ENCODE measurements at regions of chr19 and their contacts with region 1.

Region 1: DNA sequence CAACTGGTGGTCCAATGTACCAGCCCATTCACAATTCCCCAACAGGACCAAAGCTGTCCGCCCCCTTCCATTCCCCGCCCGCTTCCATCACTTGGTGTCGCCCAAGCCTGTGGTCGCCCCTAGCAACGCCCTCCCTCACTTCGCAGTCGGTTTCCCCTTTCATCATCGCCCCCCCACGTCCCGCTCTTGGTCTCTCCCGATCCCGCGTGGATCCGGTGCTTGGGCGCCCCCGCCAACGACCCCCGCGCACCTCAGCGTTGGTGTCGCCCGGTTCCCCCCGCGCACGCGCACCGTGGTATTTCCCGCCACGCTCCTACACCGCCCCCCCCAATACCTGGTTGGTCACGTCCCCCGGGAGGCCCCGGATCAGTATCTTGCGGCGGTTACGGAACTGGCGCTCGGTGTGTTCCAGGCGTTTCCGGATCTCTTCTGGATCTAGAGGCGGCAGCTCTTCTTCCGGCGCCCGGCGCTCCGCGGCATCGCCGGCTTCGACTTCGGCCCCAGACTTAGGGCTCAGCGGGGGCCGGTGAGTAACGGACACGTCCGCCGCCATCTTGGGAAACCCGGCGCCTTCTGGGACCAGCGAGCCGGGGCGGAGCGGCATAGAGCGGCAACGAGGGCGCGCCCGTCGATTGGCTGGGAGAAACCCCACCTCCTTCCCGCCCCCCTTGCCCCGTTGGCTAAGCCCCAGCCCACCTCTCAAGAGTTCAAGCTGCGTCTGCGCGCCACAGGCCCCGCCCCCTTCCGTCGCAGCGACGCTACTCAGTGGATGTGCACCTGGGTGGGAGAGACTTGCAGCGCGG is at the start of gene RAVER1:
- DNase-seq: peak; percentile 99
- ATAC-seq: peak; percentile 97
- H3K4me3 Mint-ChIP-seq: peak within 1 kb of the TSS; percentile 97
- H3K27ac Mint-ChIP-seq: peak within 1 kb of the TSS; percentile 96
- H3K4me1 Mint-ChIP-seq: peaks cover 25% of the 10 kb centered on the region
- H3K27me3 Mint-ChIP-seq: no peaks in the 10 kb centered on the region
- total RNA-seq, gene RAVER1: 83.7 to 90.8 TPM

Region 2: DNA sequence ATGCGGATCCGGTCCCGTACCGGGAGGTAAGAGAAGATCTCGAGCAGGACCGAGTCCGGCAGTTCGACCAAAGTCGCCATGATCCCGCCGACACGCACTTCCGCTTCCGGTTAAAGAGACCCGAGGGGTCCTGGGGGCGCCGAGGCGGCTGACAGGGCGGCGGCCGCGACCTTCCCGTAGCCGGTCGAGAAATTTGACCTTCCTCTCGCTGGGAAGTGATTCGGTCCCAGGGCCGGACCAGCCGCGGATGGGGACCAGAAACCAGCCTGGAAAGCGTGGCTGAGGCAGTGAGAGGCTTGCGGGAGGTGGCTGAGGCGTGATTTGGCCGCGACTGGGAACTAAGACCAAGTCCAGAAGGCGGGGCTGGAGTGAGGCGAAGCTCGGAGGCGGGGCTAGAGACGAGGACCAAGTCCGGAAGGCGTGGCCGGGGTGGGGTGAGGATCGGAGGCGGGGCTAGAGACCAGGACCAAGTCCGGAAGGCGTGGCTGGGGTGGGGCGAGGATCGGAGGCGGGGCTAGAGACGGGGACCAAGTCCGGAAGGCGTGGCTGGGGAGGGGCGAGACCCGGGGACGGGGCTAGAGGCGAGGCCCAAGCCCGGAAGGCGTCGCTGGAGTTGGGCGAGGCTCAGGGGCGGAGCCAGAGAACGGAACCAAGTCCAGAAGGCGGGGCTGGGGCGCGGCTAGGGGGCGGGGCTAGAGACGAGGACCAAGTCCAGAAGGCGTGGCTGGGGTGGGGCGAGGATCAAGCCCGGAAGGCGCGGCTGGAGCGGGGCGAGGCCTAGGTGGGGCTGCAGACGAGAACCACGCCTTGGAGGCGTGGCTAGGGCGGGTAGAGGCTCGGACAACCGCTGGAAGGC is 514.2 kb before region 1 on chr19 and contains the start of gene FBXL12:
- CTCF ChIA-PET with region 1: no interaction called
- POLR2A ChIA-PET with region 1: no interaction called
- intact Hi-C with region 1: loop called in 1 of 2 experiments (anchors 1 kb)
- DNase-seq: peak; percentile 100
- ATAC-seq: peak; percentile 92
- H3K4me3 Mint-ChIP-seq: peak within 1 kb of the TSS; percentile 88
- H3K27ac Mint-ChIP-seq: peak within 1 kb of the TSS; percentile 90
- H3K4me1 Mint-ChIP-seq: peaks cover 26% of the 10 kb centered on the region
- H3K27me3 Mint-ChIP-seq: no peaks in the 10 kb centered on the region
- total RNA-seq, gene FBXL12: 19.9 to 22.5 TPM

Region 3: GRCh38 chr19:10106100-10106936 is 226.8 kb before region 1 on chr19 and contains the start of gene PPAN:
- CTCF ChIA-PET with region 1: no interaction called
- POLR2A ChIA-PET with region 1: no interaction called
- intact Hi-C with region 1: loop called in 1 of 2 experiments (anchors 1 kb)
- DNase-seq: peak; percentile 99
- ATAC-seq: peak; percentile 58
- H3K4me3 Mint-ChIP-seq: peak within 1 kb of the TSS; percentile 90
- H3K27ac Mint-ChIP-seq: peak within 1 kb of the TSS; percentile 99
- H3K4me1 Mint-ChIP-seq: peaks cover 67% of the 10 kb centered on the region
- H3K27me3 Mint-ChIP-seq: no peaks in the 10 kb centered on the region
- total RNA-seq, gene PPAN: 139 to 149 TPM

Region 4: GRCh38 chr19:10259162-10259905 is 73.8 kb before region 1 on chr19:
- CTCF ChIA-PET with region 1: interaction called, 3 read pairs
- POLR2A ChIA-PET with region 1: interaction called, 3 read pairs
- intact Hi-C with region 1: loop called in 1 of 2 experiments (anchors 5 kb)
- DNase-seq: peak; percentile 99
- ATAC-seq: peak; percentile 73
- H3K4me3 Mint-ChIP-seq: peak overlapping the region; percentile 53
- H3K27ac Mint-ChIP-seq: peak overlapping the region; percentile 90
- H3K4me1 Mint-ChIP-seq: peaks cover 26% of the 10 kb centered on the region
- H3K27me3 Mint-ChIP-seq: no peaks in the 10 kb centered on the region

Region 5: GRCh38 chr19:10315335-10316214 is 17.6 kb before region 1 on chr19 and contains the start of gene FDX2:
- CTCF ChIA-PET with region 1: no interaction called
- POLR2A ChIA-PET with region 1: interaction called, 5 read pairs
- intact Hi-C with region 1: loop called in 1 of 2 experiments (anchors 1 kb)
- DNase-seq: peak; percentile 95
- ATAC-seq: peak; percentile 94
- H3K4me3 Mint-ChIP-seq: peak within 1 kb of the TSS; percentile 89
- H3K27ac Mint-ChIP-seq: peak within 1 kb of the TSS; percentile 80
- H3K4me1 Mint-ChIP-seq: peaks cover 16% of the 10 kb centered on the region
- H3K27me3 Mint-ChIP-seq: no peaks in the 10 kb centered on the region
- total RNA-seq, gene FDX2: 11.7 to 13.3 TPM

Region 6: GRCh38 chr19:10461047-10461790 is 128.1 kb after region 1 on chr19:
- CTCF ChIA-PET with region 1: interaction called, 3 read pairs
- POLR2A ChIA-PET with region 1: no interaction called
- intact Hi-C with region 1: loop called in 1 of 2 experiments (anchors 1 kb)
- DNase-seq: peak; percentile 98
- ATAC-seq: peak; percentile 98
- H3K4me3 Mint-ChIP-seq: peak overlapping the region; percentile 43
- H3K27ac Mint-ChIP-seq: no peak overlapping the region
- H3K4me1 Mint-ChIP-seq: peaks cover 9% of the 10 kb centered on the region
- H3K27me3 Mint-ChIP-seq: peaks cover 3% of the 10 kb centered on the region

Region 7: DNA sequence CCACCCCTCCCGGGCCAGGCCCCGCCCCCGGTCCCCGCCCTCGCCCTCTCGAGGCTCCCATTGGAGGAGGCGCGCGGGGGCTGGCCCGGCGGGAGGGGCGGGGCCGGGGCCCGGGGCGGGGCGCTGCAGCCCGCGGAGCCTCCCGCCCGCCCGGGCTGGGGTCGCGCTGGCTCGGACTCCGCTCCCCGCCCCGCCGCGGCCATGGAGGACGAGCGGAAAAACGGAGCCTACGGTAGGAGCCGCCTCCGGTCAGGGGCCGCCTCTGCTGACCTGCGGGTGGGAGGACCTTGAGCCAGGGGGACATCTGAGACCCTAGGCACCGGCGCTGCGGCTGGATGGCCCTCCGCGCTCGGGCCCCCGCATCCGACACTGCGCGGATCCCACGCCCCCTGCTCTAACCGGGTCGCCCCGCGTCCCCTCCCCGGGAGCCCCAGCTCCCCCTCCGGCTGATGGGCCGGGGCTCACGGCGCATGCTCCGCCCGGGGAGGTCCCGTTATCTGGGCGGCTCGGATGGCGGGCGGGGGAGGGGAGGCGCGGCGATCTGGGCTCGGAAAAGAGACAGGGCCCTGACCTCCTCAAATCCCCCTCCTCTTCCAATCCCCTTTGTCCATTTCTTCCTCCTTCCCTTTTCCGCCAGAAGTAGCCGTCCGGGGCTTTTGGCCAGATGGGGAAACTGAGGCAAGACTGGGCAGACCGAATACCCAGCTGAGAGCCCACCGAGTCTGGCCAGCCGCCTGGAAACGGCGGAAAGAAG is 269.4 kb after region 1 on chr19:
- CTCF ChIA-PET with region 1: no interaction called
- POLR2A ChIA-PET with region 1: no interaction called
- intact Hi-C with region 1: loop called in 1 of 2 experiments (anchors 1 kb)
- DNase-seq: peak; percentile 95
- ATAC-seq: peak; percentile 84
- H3K4me3 Mint-ChIP-seq: peak overlapping the region; percentile 95
- H3K27ac Mint-ChIP-seq: peak overlapping the region; percentile 99
- H3K4me1 Mint-ChIP-seq: peaks cover 24% of the 10 kb centered on the region
- H3K27me3 Mint-ChIP-seq: no peaks in the 10 kb centered on the region

Measured in activated CD4-positive, alpha-beta T cell treated with anti-CD3 and anti-CD28 coated beads for 36 hours (primary cell).